GM10248 (cell line): ENCODE measurements at regions of chr17 and their contacts with region 1.

Region 1: GRCh38 chr17:13002766-13003451 is 14.9 kb downstream of the ELAC2 start:
- DNase-seq: peak; percentile 72
- CTCF ChIP-seq: peak; percentile 70

Region 2: DNA sequence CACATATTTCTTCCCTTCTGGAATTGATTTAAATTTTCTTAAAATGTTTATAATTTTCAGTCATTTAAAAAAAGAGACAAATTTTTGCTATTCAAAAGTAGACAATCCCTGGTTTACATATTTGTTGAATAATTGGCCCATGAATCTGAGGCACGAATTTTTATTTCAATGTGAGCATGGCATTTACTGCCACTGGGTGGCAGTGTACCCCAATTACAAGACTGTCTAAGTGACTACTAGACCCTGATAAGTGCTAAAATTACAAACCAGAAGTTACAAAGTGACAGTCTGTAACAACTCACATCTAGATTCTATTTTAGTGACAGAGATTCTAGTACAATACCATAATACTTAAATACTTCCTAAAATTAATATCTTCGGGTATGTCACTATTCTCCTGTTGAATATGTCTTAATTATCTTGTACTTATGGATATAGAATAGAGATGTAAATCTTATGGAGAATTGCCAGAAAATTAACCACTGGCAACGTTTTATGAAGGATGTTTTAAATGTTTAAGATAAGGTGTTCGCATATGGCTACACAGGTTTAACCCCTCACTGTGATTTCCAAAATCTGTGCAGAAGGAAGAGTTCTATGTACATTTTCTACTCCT is 746.4 kb before region 1 on chr17:
- CTCF ChIA-PET with region 1: interaction called, 19 read pairs
- POLR2A ChIA-PET with region 1: no interaction called
- DNase-seq: peak; percentile 47
- CTCF ChIP-seq: peak; percentile 75

Region 3: DNA sequence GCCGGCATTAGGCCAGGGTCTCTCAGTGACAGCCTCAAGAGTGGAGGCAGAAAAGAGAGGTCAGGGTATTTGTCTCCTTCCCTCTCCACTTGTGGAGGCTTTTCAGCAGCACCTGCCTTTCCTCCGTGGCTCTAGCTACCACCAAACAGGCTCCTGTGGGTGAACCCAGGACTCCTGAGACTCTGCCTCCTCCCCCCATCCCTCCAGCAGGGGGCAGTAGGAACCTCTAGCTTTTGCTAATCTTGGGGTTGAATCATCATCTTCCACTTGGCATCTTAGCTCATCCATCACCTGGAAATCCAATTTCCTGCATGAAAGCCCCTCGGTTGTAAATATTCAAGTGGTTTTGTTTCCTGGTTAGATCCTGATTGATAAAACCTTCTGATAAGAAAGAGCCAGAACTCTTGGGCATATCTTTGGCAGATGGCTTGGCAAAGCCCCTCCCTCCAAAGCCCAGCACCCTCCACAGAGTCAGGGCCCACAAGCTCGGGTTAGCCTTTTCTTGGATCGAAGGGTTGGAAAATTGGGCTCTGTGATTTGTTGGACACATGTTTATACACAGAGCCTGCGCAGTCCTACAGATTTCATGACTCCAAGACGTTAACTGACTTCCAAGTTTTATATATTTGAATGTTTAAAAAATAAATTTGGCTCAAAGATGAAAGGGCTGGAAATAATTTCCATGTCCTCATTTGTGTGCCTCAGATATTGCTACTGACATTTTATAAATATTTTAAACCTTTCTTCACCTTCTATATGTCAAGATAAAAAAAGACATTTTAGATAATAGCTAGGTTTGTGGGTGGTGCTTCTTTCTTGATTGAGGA is 660.1 kb before region 1 on chr17:
- CTCF ChIA-PET with region 1: interaction called, 11 read pairs
- POLR2A ChIA-PET with region 1: no interaction called
- DNase-seq: peak; percentile 52
- CTCF ChIP-seq: peak; percentile 30

Region 4: DNA sequence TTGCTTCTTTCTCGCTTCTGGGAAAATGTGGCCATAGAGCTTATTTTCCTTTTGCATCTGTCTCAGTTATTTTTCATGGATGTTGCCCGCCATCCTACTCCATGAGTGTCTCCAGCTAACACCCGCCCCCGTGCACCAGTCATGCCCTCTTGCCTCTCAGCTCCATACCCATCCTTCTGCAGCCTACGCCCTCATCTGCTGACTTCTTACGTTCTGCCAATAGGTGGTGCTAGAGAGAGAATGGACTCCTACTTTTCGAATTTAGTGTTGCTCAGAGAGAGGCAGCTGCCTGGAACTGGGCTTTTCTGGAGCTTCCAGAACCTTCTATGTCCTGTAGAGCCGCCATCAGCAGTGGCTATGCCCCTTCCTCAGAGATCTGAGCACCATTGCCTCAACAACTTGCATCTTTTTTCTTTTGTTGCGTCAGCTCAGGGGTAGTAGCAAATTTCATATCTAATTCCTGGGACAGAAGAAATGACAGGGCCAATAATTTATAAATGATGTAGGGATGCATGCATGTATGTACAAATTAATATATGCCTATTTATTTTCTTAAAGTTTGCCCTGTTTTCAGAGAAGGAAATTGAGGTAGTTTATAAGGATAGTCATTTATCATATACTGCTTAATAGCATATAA is 456.9 kb before region 1 on chr17:
- CTCF ChIA-PET with region 1: interaction called, 19 read pairs
- POLR2A ChIA-PET with region 1: no interaction called
- DNase-seq: peak; percentile 62
- CTCF ChIP-seq: peak; percentile 77

Region 5: DNA sequence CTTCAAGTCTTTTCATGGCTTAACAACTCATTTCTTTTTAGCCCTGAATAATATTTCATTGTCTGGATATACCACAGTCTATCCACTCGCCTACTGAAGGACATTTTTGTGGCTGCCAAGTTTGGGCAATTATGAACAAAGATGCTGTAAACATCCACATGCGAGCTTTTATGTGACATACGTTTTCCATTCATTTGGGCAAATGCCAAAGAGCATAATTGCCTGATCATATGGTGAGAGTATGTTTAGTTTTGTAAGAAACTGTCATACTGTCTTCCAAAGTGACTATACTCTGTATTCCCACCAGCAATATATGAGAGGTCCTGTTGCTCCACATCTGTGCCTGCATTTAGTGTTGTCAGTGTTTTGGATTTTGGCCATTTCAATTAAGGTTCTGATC is 66.4 kb before region 1 on chr17:
- CTCF ChIA-PET with region 1: no interaction called
- POLR2A ChIA-PET with region 1: no interaction called
- DNase-seq: no peak
- CTCF ChIP-seq: no peak

Region 6: GRCh38 chr17:12983991-12984884 is 18.7 kb before region 1 on chr17:
- CTCF ChIA-PET with region 1: interaction called, 37 read pairs
- POLR2A ChIA-PET with region 1: no interaction called
- DNase-seq: no peak
- CTCF ChIP-seq: no peak

Region 7: DNA sequence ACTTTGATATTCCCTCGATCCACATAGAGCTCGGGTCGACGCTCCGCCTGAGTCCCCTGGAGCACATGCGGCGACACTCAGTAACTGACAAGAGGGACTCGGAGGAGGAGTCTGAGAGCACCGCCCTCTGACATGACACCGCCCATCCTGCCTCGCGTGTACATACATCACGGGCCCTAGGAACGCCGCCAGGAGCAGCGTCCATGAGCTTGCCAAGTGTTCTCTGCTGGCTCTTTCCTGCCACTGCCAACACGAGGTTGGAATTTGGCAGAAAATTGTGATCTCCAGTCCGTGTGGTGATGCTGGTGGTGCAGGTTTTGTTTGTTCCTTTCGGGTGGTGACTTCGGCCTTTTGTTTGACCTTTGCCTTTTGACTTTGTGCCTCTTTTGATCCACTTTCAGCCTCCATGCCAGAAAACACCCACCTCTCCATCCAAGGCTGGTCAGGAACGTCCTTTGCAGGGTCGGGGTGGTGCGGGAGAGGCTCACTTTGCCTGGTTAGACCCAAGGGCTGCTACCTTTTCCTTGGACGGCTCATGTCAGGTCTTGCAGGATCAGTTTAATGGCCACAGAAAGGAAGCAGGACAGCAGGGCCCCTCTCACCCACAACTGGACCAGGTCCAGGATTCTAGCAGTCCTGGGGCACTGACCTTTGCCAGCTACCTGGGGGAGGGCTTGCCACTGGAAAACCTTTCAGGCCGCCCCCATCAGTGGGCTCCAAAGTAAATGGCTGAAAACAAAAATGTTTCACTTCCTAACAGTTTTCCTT is 12.7 kb before region 1 on chr17:
- CTCF ChIA-PET with region 1: interaction called, 37 read pairs
- POLR2A ChIA-PET with region 1: no interaction called
- DNase-seq: no peak
- CTCF ChIP-seq: no peak

Region 8: GRCh38 chr17:13017659-13018459 is 14.9 kb after region 1 on chr17 and contains the start of gene ELAC2:
- CTCF ChIA-PET with region 1: interaction called, 56 read pairs
- POLR2A ChIA-PET with region 1: interaction called, 3 read pairs
- DNase-seq: peak; percentile 96
- CTCF ChIP-seq: no peak

Region 9: DNA sequence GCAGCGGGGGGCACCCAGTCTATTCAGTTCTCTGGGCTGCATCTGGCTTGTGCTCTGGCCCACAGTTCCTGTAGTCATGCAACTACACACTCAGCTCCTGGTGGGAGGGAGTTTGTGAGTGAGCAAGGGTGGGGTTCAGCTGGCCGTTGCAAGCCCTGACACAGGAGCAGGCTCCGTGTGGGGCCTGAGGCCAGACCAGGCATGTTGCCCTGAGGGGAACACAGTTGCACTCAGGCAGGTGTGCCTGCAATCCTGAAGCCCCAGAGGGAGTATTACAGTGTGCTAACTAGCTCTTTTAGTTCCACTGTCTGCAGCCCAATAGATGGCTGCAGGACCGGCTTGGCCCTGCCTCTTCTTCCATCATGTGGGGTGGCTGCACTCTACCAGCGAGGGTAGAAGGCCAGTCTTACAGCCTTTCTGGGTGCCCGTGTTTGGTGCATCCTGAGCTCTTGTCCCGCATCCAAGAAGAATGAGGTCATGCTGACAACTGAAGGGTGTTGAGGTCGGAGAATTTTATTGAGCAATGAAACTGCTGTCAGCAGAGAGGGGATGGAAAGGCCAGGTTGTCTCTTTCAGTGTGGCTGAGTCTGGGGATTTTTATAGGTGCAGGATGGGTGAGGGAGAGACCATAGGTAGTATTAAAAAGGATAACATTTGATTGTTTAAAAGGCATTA is 64.9 kb after region 1 on chr17:
- CTCF ChIA-PET with region 1: no interaction called
- POLR2A ChIA-PET with region 1: no interaction called
- DNase-seq: no peak
- CTCF ChIP-seq: no peak